Panc1 (cell line): ENCODE measurements at regions of chr9 and their contacts with region 1.

Region 1: GRCh38 chr9:123281659-123282350 is 13.4 kb upstream of the STRBP start:
- DNase-seq: no peak
- ATAC-seq: no peak
- H3K4me3 ChIP-seq: no peak overlapping the region
- H3K27ac ChIP-seq: no peak overlapping the region
- H3K4me1 ChIP-seq: no peaks in the 10 kb centered on the region
- H3K27me3 ChIP-seq: no peaks in the 10 kb centered on the region
- CTCF ChIP-seq: no peak

Region 2: DNA sequence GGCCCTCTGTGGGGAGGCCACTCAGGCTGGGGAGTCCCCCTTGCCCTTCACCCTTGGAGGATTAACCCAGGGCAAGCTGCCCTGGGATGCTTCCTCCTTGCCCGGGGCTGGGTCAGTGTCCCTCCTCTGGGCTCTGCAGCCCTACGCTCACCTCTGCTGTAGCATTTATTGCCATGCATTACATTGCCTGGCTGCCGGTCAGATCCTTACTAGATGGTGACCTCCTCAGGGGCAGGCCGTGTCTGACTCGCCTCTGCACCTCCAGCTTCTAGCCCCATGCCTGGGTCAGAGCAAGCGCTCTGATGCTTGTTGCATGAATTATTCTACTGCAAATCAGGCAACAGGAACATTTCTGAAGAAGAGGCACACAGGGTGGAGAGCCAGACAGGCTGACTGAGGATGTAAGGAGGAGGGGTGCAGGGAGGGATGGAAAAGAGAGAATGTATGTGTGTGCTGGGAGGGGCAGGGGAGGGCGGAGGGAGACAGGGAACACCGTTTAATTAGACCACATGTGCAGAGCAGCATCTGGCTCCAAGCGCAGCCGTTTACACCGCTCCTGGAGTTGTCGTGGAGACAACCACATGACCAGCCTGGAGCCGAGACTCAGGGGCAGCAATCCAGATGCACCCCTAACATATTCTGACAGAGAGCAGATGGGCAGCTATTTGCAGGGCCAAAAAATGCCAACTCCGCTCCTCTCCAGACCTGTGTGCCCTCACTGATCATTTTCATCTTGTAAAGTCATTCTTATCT is 191.2 kb after region 1 on chr9:
- CTCF ChIA-PET with region 1: no interaction called
- POLR2A ChIA-PET with region 1: no interaction called
- in situ Hi-C with region 1: no loop called
- intact Hi-C with region 1: no loop called
- DNase-seq: no peak
- ATAC-seq: no peak
- H3K4me3 ChIP-seq: no peak overlapping the region
- H3K27ac ChIP-seq: no peak overlapping the region
- H3K4me1 ChIP-seq: no peaks in the 10 kb centered on the region
- H3K27me3 ChIP-seq: no peaks in the 10 kb centered on the region
- CTCF ChIP-seq: no peak

Region 3: GRCh38 chr9:123975871-123976270 is 694.1 kb after region 1 on chr9:
- CTCF ChIA-PET with region 1: no interaction called
- POLR2A ChIA-PET with region 1: interaction called, 14 read pairs
- in situ Hi-C with region 1: no loop called
- intact Hi-C with region 1: no loop called
- DNase-seq: no peak
- ATAC-seq: no peak
- H3K4me3 ChIP-seq: no peak overlapping the region
- H3K27ac ChIP-seq: no peak overlapping the region
- H3K4me1 ChIP-seq: no peaks in the 10 kb centered on the region
- H3K27me3 ChIP-seq: no peaks in the 10 kb centered on the region
- CTCF ChIP-seq: no peak